WTC11 (cell line): ENCODE measurements at regions of chr1 and their contacts with region 1.

Region 1: DNA sequence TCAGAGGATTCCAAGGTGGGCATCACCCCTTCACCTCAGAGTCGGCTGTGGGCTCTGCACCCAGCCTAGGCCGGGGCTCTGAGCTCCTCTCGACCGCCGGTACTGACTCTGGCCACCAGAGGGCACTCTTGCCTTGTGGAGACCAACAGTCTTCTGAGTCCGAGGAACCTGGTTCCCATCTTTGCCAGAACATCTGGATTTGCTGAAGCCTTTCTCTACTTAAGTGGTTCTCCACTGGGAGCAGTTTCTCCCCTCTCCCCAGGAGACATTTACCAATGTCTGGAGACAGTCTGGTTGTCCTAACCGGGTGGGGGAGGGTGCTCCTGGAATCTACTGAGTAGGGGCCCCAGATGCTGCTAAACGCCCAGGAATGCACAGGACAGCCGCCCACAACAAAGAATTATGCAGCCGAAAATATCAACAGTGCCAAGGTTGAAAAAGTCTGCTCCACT is 9.4 kb downstream of the ETV3L start:
- DNase-seq: peak; percentile 96
- ATAC-seq: peak; percentile 94
- H3K4me3 Mint-ChIP-seq: no peak overlapping the region
- H3K27ac Mint-ChIP-seq: no peak overlapping the region
- H3K4me1 Mint-ChIP-seq: peaks cover 23% of the 10 kb centered on the region
- H3K27me3 Mint-ChIP-seq: no peaks in the 10 kb centered on the region; the same call in 1 of the 2 replicates
- CTCF ChIP-seq: peak; percentile 88

Region 2: DNA sequence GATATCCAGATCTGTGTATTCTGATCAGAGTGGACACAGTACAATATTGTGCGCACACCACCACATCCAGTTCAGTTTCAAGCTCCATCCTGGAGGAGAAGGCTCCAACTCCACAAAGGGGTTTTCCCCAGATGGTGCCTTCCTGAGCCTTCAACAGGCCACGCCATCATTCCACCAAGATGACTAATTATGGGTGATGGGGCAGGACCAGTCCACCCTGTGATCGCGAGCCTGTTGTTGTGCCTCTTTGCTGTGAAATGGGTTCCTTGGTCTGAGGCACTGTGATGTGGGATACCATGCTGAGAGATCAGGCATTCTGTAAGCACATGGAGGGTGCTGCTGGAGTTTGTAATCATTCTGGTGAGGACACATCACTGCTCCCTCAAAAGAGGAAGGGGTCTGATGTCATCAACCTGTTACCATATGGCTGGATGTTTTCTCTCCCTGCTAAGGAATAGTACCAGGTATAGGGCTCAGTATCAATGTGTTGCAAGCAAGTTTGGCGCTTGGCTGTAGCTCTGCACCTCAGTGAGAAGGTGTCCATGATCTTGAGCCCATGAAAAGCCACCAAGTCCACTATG is 266.9 kb before region 1 on chr1:
- CTCF ChIA-PET with region 1: no interaction called
- POLR2A ChIA-PET with region 1: no interaction called
- DNase-seq: no peak
- ATAC-seq: no peak
- H3K4me3 Mint-ChIP-seq: no peak overlapping the region
- H3K27ac Mint-ChIP-seq: no peak overlapping the region
- H3K4me1 Mint-ChIP-seq: no peaks in the 10 kb centered on the region
- H3K27me3 Mint-ChIP-seq: peaks cover 55% of the 10 kb centered on the region
- CTCF ChIP-seq: no peak

Region 3: GRCh38 chr1:157073944-157074767 is 16.1 kb before region 1 on chr1:
- CTCF ChIA-PET with region 1: interaction called, 38 read pairs
- POLR2A ChIA-PET with region 1: no interaction called
- DNase-seq: peak; percentile 83
- ATAC-seq: peak; percentile 67
- H3K4me3 Mint-ChIP-seq: no peak overlapping the region
- H3K27ac Mint-ChIP-seq: no peak overlapping the region
- H3K4me1 Mint-ChIP-seq: peaks cover 9% of the 10 kb centered on the region
- H3K27me3 Mint-ChIP-seq: peaks cover 11% of the 10 kb centered on the region
- CTCF ChIP-seq: peak; percentile 46; the same call in 1 of the 2 replicates

Region 4: DNA sequence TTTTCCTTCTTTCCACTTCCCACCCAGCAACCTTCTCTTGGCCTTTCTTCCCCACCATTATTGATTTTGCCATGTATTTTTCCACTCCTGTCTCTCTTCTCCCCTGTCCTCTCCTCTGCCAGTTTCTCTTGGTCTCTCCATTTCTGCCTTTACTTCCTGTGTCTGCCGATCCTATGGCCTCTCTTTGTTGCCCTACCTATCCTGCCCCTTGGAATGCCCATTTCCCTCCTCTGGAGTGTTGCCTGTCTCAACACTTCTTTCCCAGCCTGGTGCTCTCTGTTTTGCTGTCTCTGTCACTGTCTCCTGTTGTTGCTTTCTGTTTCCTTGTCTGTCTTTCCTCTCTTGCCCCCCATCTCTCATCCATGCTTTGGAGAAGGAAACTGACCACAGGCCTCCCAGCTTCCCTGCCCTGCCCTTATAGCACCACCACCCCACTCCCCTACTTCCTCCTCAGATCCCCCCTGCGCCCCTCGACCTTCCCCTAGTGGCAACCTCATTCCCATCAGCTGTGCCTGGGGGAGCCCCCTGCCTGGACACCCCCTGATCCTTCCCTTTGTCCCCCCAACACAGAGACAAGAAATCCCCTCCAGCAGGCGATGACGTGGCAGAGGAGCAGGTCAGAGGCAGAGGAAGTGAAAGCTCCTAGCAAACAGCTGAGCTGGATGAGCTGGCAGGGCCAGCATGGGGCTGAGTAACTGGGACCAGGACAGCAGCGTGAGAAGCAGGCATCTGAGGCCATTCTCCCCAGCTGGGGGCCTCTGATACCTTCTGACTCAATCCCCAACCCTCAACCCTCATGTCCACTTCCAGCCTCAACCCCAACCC is 16.0 kb after region 1 on chr1:
- CTCF ChIA-PET with region 1: interaction called, 33 read pairs
- POLR2A ChIA-PET with region 1: no interaction called
- DNase-seq: no peak
- ATAC-seq: no peak
- H3K4me3 Mint-ChIP-seq: no peak overlapping the region
- H3K27ac Mint-ChIP-seq: no peak overlapping the region
- H3K4me1 Mint-ChIP-seq: peaks cover 29% of the 10 kb centered on the region
- H3K27me3 Mint-ChIP-seq: peaks cover 35% of the 10 kb centered on the region
- CTCF ChIP-seq: no peak

Region 5: GRCh38 chr1:157117527-157118057 is 27.4 kb after region 1 on chr1:
- CTCF ChIA-PET with region 1: interaction called, 38 read pairs
- POLR2A ChIA-PET with region 1: interaction called, 3 read pairs
- DNase-seq: no peak
- ATAC-seq: no peak
- H3K4me3 Mint-ChIP-seq: no peak overlapping the region
- H3K27ac Mint-ChIP-seq: peak overlapping the region; percentile 58; the same call in 1 of the 2 replicates
- H3K4me1 Mint-ChIP-seq: peaks cover 69% of the 10 kb centered on the region
- H3K27me3 Mint-ChIP-seq: peaks cover 5% of the 10 kb centered on the region; the same call in 1 of the 2 replicates
- CTCF ChIP-seq: no peak

Region 6: DNA sequence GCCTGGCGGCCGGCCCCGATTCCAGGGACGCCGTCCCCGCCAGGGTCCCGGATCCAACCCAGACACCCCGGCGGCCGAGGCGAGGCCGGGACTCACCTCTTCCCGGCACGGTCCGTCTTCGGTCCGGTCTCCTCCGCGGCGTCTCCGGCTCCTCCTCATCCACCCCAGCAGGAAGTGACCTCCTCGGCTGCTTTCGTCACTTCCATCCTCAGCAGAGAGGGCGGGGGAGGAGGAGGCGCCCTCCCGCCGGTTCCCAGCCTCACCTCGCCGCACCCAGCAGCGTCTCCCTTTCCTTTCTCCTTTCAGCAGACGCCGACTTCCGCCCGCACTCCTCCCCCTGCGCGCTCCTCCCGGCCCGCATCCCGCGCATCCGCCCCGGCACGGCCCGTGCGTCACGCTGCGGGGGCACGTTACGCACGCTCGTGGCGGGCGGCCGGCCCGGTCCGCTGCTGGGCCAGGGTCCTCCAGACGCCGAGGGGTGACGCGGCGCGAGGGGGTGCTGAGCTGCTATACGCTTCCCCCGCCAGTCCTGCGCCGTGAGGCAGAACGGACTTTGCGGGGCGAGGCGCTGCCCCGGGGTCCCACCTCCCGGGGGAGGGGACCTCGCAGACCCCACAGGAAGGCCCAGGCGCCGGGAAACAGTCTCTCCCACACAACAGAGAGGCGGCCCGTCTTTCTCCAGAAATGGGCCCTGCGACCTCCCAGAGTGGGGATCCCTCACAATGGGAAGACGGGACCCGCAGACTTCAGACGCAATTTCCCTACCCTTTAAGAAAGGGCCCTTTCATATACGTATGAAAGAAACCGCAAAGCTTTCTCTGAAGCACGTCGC is 48.2 kb after region 1 on chr1 and contains the start of gene ETV3:
- CTCF ChIA-PET with region 1: interaction called, 85 read pairs
- POLR2A ChIA-PET with region 1: no interaction called
- DNase-seq: peak; percentile 86
- ATAC-seq: peak; percentile 77
- H3K4me3 Mint-ChIP-seq: peak within 1 kb of the TSS; percentile 94
- H3K27ac Mint-ChIP-seq: peak within 1 kb of the TSS; percentile 97
- H3K4me1 Mint-ChIP-seq: peaks cover 56% of the 10 kb centered on the region
- H3K27me3 Mint-ChIP-seq: peaks cover 6% of the 10 kb centered on the region
- CTCF ChIP-seq: no peak
- total RNA-seq, gene ETV3: 21.3 to 26.0 TPM (median 22.1 TPM) in 3 replicates

Region 7: DNA sequence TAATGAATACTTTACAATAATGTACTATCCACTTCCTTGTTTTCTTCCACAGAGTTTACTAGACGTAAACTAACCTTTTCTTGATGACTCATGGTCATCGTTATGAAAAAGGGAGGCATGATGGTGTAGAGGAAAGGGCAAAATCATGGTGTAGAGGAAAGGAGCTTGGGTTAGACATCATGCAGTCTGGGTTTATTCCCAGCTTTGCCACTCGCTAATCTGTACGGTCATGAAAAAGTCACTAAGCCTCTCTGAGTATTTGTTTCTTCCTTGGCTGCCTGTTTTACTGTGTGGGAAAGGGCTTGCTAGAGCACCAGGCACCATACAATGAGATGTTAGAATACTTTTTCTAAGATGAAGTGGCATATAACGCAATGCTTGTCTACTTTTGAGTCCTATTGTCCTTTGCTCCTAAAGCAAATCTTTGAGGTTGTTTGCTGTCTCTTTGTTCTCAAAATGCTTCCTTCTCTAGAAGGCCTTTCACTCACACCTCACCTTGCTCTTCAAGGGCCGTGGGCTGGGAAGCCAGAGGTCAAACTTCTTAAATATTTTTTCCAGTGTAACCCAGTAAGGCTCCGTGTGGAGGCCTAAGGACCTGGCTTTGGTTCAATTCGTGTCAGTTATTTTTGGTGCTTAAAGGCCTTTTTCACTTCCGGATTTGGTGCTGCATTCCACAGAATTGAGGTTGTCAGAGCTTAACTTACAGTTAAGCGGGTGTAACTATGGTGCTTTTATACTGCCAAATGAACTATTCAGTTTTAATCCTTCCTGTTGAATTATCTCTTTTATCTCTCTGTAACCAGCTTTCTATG is 57.9 kb after region 1 on chr1:
- CTCF ChIA-PET with region 1: interaction called, 304 read pairs
- POLR2A ChIA-PET with region 1: interaction called, 3 read pairs
- DNase-seq: no peak
- ATAC-seq: no peak
- H3K4me3 Mint-ChIP-seq: no peak overlapping the region
- H3K27ac Mint-ChIP-seq: no peak overlapping the region
- H3K4me1 Mint-ChIP-seq: no peaks in the 10 kb centered on the region
- H3K27me3 Mint-ChIP-seq: peaks cover 9% of the 10 kb centered on the region; the same call in 1 of the 2 replicates
- CTCF ChIP-seq: no peak

Region 8: DNA sequence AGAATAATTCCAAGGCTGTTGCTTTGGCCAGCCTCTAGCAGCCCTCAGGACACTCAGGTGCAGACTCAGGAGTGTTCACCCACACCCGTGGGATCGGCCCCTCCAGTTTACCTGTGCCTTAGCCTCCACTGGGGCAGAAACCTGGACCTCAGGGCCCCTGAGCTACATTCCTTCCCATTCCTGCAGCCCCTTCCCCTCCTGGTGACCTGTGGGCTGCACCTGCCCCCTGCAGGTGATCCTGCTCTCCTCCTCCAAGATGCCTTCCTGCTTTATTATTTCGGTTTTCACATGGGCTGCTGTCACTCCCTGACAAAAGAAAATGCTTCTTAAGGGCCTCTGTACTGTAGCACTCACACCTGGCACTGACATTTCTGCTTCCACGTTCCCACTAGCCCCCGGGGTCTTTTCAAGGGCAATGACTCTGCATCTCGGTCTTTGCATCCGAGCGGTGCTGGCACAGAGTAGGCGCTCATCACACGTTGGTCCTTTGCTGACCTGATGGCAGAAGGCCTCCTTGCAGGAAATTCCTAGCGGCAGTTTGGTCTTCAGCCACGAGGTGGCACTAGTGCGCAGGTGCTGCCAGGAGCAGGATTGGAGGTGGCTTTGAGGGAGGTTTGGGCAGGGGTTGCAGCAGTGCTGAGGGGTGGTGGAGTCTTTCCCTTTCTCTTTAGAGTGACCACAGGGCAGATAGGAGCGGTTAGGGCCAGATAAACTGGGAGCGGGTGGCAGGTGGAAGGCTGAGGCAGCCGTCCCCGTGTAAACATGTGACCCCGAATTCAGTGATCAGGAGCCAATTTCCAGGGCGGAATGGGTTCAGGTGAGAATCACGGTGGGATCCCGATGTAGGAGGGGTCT is 73.3 kb after region 1 on chr1:
- CTCF ChIA-PET with region 1: interaction called, 304 read pairs
- POLR2A ChIA-PET with region 1: no interaction called
- DNase-seq: peak; percentile 96
- ATAC-seq: peak; percentile 81
- H3K4me3 Mint-ChIP-seq: peak overlapping the region; percentile 46
- H3K27ac Mint-ChIP-seq: peak overlapping the region; percentile 82
- H3K4me1 Mint-ChIP-seq: peaks cover 45% of the 10 kb centered on the region
- H3K27me3 Mint-ChIP-seq: no peaks in the 10 kb centered on the region; the same call in 1 of the 2 replicates
- CTCF ChIP-seq: peak; percentile 83

Region 9: DNA sequence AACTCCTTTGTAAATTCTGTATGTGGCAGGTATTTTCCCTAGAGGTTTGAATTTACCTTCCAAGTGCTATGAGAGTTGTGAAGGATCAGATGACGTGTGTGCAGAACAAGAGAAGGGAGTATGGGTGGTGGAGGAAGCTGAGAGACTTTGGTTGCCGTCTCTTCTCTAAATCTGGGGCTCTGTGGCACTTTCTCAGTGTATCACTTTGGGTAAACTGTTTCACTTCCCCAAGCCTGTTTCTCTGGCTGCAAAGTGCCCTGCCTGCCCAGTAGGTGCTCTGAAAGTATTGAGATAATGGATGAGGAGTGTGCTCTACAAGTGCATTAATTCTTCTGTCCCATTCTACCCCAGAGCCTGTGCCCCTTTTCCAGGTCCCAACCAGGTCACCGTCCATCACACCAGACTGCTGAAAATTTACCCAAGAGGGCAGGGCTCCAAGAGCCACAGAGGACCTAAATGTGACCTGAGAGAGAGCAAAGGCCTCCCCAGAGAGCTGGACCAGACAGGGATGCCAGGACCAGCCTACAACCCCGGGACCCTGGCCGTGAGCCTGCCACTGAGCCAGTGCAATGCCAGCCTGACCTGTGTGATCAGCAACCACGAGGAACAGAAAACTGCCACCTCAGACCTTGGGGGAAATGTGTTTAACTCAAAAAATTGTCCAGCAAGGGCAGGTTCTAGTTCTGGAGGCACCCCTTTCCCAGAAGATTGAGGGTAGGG is 179.6 kb after region 1 on chr1:
- CTCF ChIA-PET with region 1: no interaction called
- POLR2A ChIA-PET with region 1: no interaction called
- DNase-seq: no peak
- ATAC-seq: no peak
- H3K4me3 Mint-ChIP-seq: no peak overlapping the region
- H3K27ac Mint-ChIP-seq: no peak overlapping the region
- H3K4me1 Mint-ChIP-seq: no peaks in the 10 kb centered on the region
- H3K27me3 Mint-ChIP-seq: peaks cover 5% of the 10 kb centered on the region
- CTCF ChIP-seq: no peak